ENCODE measurements at regions of chr10 and their contacts with region 1.

Region 1: DNA sequence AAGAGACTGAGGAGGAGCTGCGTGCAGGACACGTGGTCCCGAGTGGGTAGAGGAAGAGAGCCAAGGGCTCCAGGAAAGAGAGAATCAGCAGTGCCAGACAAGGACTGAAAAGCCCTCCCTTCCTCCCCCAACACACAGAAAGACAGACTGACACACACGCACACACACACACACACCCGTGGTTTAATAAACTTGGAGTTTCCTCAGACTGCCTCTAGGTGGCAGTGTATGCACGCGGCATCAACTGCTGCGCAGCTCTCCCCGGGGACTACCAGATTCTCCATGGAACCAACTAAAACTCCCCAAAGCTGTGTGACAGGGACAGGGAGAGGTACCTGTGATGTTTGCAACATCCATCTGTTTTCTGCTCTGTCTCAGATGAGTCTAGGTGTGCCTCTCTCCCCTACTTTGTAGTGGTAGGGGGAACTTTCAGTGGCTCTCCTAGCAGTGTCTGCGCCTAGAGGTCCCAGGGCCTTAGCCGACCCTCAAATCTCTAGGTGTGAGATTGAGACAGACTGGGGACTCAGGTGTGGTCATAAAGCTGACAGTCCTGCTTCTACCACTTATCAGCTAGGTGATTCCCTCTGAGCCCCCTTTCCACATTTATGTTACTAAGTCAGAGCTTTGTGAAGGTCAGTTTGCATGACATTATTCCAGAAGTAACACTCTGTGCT is 9.3 kb upstream of the TSPAN14 start:
- DNase-seq: peak; percentile 47
- H3K4me3 Mint-ChIP-seq: no peak overlapping the region
- H3K27ac Mint-ChIP-seq: peak overlapping the region; percentile 49
- H3K4me1 Mint-ChIP-seq: peaks cover 53% of the 10 kb centered on the region
- H3K27me3 Mint-ChIP-seq: peaks cover 10% of the 10 kb centered on the region

Region 2: DNA sequence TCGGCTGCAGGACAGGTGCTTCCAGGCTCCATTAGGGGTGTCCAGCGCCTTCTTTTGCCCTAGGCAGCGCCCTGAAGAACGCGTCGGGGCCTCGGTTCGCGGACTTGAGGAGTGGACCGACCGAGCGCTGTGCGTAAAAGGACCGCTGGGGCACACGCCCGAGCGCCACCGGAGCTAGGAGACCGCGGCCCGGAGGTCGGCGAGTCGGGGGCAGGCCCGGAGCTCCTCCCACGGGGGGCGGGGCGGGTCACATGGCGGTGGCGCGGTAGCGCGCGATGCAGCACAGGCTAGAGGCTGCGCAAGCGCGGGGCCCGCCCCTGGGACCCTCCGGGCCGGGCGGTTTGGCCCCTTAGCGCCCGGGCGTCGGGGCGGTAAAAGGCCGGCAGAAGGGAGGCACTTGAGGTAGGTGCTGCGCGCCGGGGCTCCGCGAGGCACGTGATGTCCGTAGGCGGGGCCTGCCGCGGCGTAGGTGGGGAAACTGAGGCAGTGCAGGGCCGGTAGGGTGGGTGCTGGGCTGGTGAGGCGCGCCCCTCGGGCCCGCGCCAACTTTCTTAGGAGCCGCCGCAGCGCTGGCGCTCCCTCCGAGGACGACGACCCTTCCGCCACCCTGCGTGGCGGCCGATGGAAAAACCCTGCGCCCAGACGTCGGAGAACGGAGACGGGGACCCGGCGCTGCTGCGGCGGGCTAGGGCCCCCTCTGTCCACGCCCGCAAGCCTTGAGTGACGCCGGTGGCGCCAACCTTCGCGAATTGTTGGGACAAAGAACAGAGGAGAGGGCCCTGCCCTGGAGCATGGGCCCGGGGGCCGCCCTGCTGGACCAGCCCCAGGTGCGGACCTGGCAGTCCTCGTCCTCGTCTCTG is 36.3 kb before region 1 on chr10 and contains the start of gene PRXL2A:
- intact Hi-C with region 1: loop called (anchors 2 kb)
- DNase-seq: peak; percentile 81
- H3K4me3 Mint-ChIP-seq: peak within 1 kb of the TSS; percentile 89
- H3K27ac Mint-ChIP-seq: peak within 1 kb of the TSS; percentile 93
- H3K4me1 Mint-ChIP-seq: peaks cover 28% of the 10 kb centered on the region
- H3K27me3 Mint-ChIP-seq: peaks cover 20% of the 10 kb centered on the region
- total RNA-seq, gene PRXL2A: 11.9 and 13.2 TPM in 2 replicates

Region 3: DNA sequence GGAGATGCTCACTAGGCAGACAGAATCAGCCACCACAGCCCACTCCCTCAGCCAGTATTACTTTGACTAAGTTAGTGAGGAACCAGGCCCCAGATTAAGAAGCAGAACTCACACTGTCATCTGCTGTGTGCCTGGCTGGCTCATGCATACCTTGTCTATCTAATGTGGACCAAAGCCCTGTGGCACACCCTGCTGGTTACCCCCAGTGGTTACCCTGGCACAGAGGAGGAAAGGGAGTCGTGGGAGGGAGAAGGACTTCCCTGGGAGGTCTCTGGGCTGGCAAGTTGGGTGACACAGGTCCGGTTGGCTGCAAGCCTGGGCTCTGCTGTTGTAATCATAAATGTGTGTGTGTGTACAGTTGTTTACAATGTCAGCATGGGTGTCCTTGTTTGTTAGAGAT is 85.5 kb after region 1 on chr10:
- intact Hi-C with region 1: loop called (anchors 1 kb)
- DNase-seq: peak; percentile 29
- H3K4me3 Mint-ChIP-seq: peak overlapping the region; percentile 72
- H3K27ac Mint-ChIP-seq: peak overlapping the region; percentile 92
- H3K4me1 Mint-ChIP-seq: peaks cover 73% of the 10 kb centered on the region
- H3K27me3 Mint-ChIP-seq: no peaks in the 10 kb centered on the region

Region 4: GRCh38 chr10:80662577-80663261 is 217.9 kb after region 1 on chr10:
- intact Hi-C with region 1: loop called (anchors 2 kb)
- DNase-seq: peak; percentile 26
- H3K4me3 Mint-ChIP-seq: no peak overlapping the region
- H3K27ac Mint-ChIP-seq: no peak overlapping the region
- H3K4me1 Mint-ChIP-seq: peaks cover 6% of the 10 kb centered on the region
- H3K27me3 Mint-ChIP-seq: peaks cover 7% of the 10 kb centered on the region

Region 5: DNA sequence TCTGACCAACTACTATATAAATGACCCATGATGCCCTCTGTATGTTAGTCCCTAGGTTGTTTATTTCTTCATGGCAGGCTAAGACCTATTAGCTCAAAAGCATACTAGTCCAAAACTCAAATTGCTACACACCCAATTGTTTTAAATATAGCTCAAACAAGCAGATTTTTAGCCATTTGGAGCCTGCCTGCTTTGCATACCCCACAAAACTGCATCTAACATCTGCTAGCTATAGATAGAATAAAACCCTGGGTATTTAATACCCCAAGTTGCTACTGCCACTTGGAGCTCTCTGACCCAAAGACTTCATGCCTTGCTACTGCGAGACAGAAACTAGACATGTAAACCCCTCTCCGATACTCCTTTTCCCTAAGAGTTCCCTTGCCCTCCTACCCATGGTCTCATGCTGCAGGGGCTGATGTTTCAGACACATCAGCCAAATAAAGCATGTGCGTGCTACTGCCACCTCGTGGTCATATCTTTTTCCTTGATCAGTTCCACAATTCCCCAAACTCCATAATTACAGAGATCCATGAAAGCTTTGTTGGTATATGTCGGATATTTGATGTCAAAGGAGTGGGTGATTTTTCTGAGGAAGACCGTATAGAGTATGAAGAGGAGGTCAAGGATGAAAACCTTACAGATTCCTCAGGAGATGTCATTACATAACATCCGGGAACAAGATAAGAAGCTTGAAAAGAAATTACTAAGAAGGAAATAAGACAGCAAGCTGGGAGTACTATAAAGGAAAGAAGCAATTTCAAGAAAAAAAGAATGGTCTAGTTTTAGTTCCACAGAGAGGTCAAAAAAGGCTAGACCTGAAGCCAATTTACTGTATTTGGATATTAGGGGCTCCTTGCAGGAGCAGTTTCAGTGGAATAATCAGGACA is 479.5 kb after region 1 on chr10:
- intact Hi-C with region 1: loop called (anchors 2 kb)
- DNase-seq: no peak
- H3K4me3 Mint-ChIP-seq: no peak overlapping the region
- H3K27ac Mint-ChIP-seq: no peak overlapping the region
- H3K4me1 Mint-ChIP-seq: no peaks in the 10 kb centered on the region
- H3K27me3 Mint-ChIP-seq: peaks cover 8% of the 10 kb centered on the region

Measured in activated T-helper 1 cell treated with anti-CD3 and anti-CD28 coated beads, Interleukin-12 subunit alpha, Interleukin-12 subunit beta, Interleukin-2, Interleukin-4 antibody, amounts not matched to agents 30 ng/mL and 10 ng/mL and 1 ng/mL, durations not matched to agents 14 hours and 24 hours and 36 hours (primary cell).